AG04450 (cell line): ENCODE measurements at regions of chr5 and their contacts with region 1.

Region 1: GRCh38 chr5:79133657-79134451 is 22.2 kb downstream of the BHMT start:
- DNase-seq: peak; percentile 71
- H3K4me3 ChIP-seq: peak overlapping the region; percentile 48
- H3K27ac ChIP-seq: peak overlapping the region; percentile 80
- H3K27me3 ChIP-seq: peaks cover 5% of the 10 kb centered on the region
- CTCF ChIP-seq: peak; percentile 89

Region 2: DNA sequence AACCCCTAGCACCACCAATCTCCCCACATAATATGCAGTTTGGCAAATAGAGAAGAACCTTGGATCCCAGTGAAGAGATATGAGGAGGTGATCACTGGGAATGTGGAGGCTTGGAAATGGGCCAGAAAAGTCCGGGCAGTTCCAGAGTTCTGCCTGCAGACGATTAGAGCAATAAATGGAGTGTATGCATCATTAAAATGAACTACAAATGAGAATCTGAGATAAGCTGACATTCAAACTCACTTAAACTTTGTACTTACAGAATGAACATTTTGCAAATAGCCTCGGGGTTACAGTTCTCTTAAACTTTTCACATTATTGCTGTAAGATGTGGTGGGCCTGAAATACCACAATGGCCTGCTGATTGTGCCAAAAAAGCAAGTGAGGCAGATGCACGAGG is 462.2 kb before region 1 on chr5:
- CTCF ChIA-PET with region 1: no interaction called
- POLR2A ChIA-PET with region 1: no interaction called
- DNase-seq: no peak
- H3K4me3 ChIP-seq: no peak overlapping the region
- H3K27ac ChIP-seq: no peak overlapping the region
- H3K27me3 ChIP-seq: no peaks in the 10 kb centered on the region
- CTCF ChIP-seq: no peak

Region 3: DNA sequence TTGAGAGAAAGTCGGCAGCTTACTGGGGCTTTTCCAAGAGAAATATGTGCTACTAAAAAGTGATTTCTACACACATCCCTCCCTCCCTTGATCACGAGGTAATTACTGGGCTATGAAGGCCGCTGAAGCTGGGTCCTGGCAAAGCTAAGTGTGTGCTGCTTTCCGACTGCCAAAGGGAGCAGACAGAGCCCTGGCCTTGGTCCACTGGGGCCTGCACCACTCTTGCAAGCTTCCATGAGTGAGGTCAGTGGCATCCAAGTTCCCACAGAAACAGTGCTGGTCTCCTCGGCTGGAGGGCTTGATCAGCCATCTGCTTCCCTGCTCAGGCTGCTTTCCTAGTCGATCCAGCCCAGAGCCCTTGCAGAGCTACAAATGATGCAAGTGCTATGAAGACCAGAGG is 330.5 kb before region 1 on chr5:
- CTCF ChIA-PET with region 1: no interaction called
- POLR2A ChIA-PET with region 1: no interaction called
- DNase-seq: no peak
- H3K4me3 ChIP-seq: no peak overlapping the region
- H3K27ac ChIP-seq: no peak overlapping the region
- H3K27me3 ChIP-seq: no peaks in the 10 kb centered on the region
- CTCF ChIP-seq: no peak

Region 4: DNA sequence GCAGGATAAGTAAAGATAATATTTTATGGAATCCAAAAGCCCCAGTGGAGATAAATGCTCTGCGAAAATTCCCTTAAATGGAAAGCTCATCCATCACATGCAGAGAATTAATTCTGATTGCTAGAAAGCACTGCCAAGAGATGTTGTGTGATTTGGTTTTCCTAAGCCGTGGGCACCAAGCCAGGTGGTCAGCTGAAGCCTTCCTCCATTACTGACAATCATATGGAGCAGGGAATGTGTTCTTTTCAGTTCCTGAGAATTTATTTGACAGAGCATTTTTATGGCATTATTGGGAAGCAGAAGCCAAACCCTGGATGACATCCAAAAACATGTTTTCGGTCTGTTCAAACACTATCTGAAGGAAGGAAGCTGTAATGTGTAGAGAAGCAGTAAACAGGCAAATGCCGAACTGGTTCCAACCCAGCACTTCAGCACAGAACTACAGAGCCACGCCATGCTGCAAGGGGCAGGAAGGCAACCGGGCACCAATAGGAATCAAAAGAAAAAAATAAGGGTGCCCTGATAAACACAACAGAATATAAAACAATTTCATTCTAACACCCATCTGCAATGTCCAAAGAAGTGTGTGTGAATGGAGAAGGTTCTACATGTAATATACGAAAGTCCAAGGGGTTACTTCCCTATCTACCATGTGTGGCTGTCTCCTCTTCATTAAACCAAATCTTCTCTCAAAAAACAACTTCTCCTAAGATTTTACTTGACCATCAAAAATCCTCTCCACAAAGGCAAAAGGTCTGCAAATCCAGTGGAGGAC is 161.0 kb before region 1 on chr5:
- CTCF ChIA-PET with region 1: interaction called, 15 read pairs
- POLR2A ChIA-PET with region 1: no interaction called
- DNase-seq: peak; percentile 49
- H3K4me3 ChIP-seq: no peak overlapping the region
- H3K27ac ChIP-seq: no peak overlapping the region
- H3K27me3 ChIP-seq: no peaks in the 10 kb centered on the region
- CTCF ChIP-seq: no peak

Region 5: GRCh38 chr5:79109527-79110492 is 24.0 kb before region 1 on chr5:
- CTCF ChIA-PET with region 1: interaction called, 20 read pairs
- POLR2A ChIA-PET with region 1: no interaction called
- DNase-seq: no peak
- H3K4me3 ChIP-seq: no peak overlapping the region
- H3K27ac ChIP-seq: no peak overlapping the region
- H3K27me3 ChIP-seq: peaks cover 48% of the 10 kb centered on the region
- CTCF ChIP-seq: peak; percentile 31

Region 6: GRCh38 chr5:79157305-79157704 is 23.5 kb after region 1 on chr5:
- CTCF ChIA-PET with region 1: interaction called, 15 read pairs
- POLR2A ChIA-PET with region 1: no interaction called
- DNase-seq: no peak
- H3K4me3 ChIP-seq: no peak overlapping the region
- H3K27ac ChIP-seq: no peak overlapping the region
- H3K27me3 ChIP-seq: peaks cover 4% of the 10 kb centered on the region
- CTCF ChIP-seq: no peak

Region 7: DNA sequence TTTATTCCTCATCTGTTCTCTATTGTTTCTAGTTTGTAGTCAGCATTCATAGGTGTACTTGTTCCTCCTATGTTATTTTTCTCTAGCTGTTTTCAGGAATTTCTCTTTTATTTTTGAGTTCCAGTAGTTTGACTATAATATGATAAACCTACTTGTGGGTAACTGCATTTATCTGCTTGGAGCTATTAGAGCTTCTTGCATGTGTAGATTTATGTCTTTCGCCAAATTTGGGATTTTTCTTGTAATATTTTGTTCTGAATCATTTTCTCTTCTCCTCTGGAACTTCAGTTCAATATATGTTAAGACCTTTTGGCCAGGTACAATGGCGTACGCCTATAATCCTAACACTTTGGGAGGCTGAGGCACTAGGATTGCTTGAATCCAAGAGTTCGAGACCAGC is 139.5 kb after region 1 on chr5:
- CTCF ChIA-PET with region 1: no interaction called
- POLR2A ChIA-PET with region 1: no interaction called
- DNase-seq: no peak
- H3K4me3 ChIP-seq: no peak overlapping the region
- H3K27ac ChIP-seq: no peak overlapping the region
- H3K27me3 ChIP-seq: no peaks in the 10 kb centered on the region
- CTCF ChIP-seq: no peak

Region 8: DNA sequence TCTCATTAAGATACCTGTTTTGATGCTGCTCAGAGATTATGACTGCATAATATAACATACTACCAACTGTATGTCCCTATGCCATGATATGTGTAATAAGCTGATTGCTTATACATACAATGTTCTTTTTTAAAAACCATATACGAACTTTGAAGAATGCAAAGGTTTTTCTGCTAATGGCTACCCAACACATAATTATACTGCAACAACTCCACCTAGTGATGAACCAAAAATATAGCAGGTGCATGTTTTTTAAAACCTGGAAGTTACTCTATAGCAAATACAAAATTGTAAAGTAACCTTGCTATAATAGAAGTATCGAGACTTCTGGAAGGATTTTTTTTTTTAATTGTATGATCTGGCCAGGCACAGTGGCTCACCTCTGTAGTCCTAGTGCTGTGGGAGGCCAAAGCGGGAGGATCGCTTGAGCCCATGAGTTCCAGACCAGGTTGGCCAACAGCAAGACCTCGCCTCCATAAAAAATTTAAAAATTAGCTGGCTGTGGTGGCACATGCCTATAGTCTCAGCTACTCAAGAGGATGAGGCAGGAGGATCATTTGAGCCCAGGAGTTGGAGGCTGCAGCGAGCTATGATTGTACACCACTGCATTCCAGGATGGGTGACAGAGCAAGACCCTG is 331.0 kb after region 1 on chr5:
- CTCF ChIA-PET with region 1: interaction called, 161 read pairs
- POLR2A ChIA-PET with region 1: no interaction called
- DNase-seq: no peak
- H3K4me3 ChIP-seq: no peak overlapping the region
- H3K27ac ChIP-seq: no peak overlapping the region
- H3K27me3 ChIP-seq: no peaks in the 10 kb centered on the region
- CTCF ChIP-seq: peak; percentile 67

Region 9: DNA sequence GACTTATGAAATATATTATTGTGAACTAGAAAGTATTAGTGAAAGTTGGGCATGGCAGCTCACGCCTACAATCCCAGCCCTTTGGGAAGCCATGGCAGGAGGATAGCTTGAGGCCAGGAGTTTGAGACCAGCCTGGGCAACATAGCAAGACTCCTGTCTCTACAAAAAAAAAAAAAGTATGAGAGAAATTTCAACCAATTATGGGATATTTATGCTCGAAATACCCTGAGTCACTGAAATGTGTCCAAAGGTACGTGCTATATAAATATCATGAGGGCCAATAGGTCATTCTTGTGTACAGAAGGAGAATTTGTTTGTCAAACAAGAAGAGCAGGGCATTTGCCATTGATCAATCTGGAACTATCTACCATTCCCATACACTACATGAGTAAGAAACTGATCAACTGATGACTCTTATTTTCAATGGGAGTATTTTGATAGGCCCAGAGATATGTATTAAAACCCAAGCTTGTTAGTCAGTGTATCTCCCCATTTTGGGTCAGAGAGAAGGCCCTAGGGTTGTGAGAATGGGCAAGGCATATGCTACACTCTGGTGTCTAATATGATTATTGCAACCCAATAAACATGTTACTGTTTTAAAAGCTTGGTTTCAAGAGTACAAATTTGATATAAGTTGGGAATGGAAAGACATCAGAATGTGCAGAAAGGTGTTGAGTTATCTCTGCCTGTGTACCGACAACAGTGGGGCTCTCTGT is 401.8 kb after region 1 on chr5:
- CTCF ChIA-PET with region 1: interaction called, 28 read pairs
- POLR2A ChIA-PET with region 1: no interaction called
- DNase-seq: no peak
- H3K4me3 ChIP-seq: no peak overlapping the region
- H3K27ac ChIP-seq: no peak overlapping the region
- H3K27me3 ChIP-seq: peaks cover 3% of the 10 kb centered on the region
- CTCF ChIP-seq: peak; percentile 16; the same call in 1 of the 2 replicates